ENCODE measurements at regions of chr12 and their contacts with region 1.

Region 1: GRCh38 chr12:52278541-52279421 is 4.3 kb downstream of the KRT86 start:
- DNase-seq: no peak
- H3K4me3 ChIP-seq: no peak overlapping the region
- H3K27me3 ChIP-seq: no peaks in the 10 kb centered on the region
- CTCF ChIP-seq: peak; percentile 99

Region 2: DNA sequence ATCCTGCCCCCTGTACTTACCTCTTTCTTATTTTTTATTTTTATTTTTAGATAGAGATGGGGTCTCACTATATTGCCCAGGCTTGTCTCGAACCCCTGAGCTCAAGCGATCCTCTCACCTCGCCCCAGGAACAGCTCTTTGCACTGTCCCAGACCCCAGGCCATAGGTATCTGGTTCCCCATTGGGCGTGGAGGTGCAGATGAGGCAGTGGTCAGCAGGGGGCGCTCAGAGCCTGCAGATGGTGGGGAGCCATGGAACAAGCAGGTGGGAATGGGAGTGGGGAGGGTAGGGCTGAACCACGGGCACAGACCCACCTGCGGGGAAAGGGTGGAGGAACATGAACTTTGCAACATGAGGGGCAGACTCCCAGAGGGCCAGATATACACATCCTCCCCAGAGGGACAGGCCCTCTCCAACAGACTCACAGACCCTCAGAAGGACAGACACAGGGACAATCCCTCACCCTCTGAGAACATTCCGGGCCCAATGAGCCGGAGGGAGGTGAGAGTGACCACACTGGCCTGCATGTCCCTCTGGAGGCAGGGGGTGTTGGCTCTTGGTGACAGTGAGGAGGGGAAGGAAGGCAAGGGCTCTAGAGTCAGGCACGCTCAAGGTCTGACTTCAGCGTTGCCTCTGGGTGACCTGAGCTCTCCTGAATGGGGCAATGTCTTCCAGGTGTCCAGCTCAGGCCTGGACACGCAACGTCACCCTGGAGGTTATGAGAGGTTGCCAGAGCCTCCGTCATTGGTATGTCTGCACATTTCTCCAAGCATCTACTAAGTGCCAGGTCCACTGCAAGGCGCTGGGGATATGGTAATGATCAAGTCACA is 121.8 kb before region 1 on chr12:
- CTCF ChIA-PET with region 1: interaction called, 12 read pairs
- POLR2A ChIA-PET with region 1: no interaction called
- DNase-seq: no peak
- H3K4me3 ChIP-seq: no peak overlapping the region
- H3K27me3 ChIP-seq: no peaks in the 10 kb centered on the region
- CTCF ChIP-seq: peak; percentile 96

Region 3: DNA sequence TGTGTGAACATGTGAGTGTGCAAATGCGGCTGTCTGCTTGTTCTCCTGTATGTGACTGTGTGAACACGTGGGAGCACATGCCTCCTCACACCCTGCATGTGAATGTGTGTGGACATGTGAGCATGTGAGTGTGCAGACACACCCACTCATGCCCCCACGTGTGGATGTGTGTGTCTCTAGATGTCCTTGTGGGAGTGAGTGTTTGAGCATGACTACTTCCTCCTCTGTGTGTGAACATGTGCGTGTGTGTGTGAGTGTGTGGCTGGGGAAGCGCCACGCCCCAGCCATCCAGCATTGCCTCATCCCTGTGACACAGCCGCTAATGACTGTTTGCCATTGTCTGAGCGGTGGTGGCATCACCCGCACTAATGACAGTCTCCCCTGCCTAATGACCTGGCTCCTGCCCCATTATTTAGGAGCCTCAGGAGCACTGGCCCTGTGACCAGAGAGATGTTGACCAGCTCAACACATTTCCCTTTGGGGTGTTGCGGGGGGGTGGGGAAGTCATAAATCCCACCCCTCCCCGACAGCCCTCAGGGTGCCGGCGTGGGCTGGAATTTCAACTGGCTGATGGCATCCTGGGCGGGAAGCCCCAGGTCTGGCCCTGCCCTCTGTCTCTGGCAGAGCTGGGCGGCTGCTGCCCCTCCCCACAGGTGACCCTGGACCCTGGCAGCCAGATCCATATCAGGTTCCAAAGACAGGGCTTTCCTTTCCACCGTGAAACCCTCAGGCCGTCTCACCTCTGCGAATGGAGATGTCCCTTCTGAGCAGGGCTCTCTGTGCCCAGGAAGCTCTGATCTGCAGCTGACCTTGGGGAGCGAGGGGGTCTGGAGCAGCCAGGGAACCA is 75.5 kb before region 1 on chr12:
- CTCF ChIA-PET with region 1: interaction called, 15 read pairs
- POLR2A ChIA-PET with region 1: no interaction called
- DNase-seq: peak; percentile 65
- H3K4me3 ChIP-seq: no peak overlapping the region
- H3K27me3 ChIP-seq: no peaks in the 10 kb centered on the region
- CTCF ChIP-seq: no peak

Region 4: GRCh38 chr12:52221912-52222457 is 56.8 kb before region 1 on chr12:
- CTCF ChIA-PET with region 1: interaction called, 39 read pairs
- POLR2A ChIA-PET with region 1: no interaction called
- DNase-seq: no peak
- H3K4me3 ChIP-seq: no peak overlapping the region
- H3K27me3 ChIP-seq: no peaks in the 10 kb centered on the region
- CTCF ChIP-seq: peak; percentile 57

Region 5: DNA sequence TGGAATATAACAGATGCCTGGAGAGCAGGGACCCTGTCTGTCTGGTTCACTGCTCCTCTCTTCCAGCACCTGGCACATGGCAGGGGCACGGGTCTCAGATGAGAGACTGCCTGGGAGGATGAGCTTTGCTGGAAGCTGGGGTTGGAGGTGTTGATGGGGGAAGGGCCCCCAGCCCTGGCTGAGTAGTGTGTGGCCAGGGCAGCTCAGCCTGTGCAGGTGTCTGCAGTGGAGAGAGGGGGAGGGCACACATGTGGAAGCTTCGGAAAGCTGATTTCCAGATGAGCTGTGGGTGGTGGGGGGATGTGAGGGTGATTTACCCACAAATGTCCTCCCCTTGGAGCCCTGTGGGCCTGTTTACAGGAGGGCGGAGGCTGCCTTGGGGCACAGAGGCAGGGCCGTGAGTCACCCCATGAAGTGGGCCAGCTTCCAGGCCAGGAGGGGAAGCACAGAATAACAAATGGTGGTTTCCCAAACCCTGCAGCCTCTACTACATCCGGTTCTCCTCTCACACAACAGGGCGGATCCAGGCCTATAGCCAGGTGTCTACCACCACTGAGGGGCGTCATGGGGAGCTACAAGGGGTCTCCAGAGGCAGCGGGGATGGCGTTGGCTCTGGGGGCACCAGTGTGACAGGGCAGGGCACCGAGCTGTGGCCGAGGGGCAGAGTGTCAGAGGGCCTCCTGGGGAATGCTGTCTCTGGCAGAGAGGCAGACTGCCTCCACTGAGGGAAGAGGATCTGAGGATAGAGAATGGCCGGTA is 34.7 kb before region 1 on chr12:
- CTCF ChIA-PET with region 1: interaction called, 19 read pairs
- POLR2A ChIA-PET with region 1: no interaction called
- DNase-seq: peak; percentile 90
- H3K4me3 ChIP-seq: no peak overlapping the region
- H3K27me3 ChIP-seq: no peaks in the 10 kb centered on the region
- CTCF ChIP-seq: no peak

Region 6: DNA sequence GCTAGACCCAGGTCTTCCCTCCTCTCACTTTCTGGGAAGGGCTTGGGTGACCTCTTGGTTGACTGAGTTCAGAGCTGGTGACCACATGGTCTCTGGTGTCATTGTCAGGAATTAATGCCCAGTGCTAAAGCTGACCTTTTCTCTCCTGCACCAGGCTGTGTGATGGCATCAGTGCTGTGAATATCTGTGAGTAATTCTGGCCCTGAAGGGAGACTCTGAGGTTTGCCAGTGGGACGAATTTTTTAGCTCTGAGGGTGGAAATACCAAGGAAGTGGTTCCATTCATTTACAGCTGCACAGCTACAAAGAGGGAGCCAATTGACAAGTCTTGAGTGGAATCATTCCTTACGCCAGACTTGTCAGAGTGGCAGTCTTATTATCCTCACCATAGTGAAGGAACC is 10.6 kb before region 1 on chr12:
- CTCF ChIA-PET with region 1: interaction called, 86 read pairs
- POLR2A ChIA-PET with region 1: no interaction called
- DNase-seq: no peak
- H3K4me3 ChIP-seq: no peak overlapping the region
- H3K27me3 ChIP-seq: no peaks in the 10 kb centered on the region
- CTCF ChIP-seq: no peak

Region 7: GRCh38 chr12:52327052-52327829 is 48.5 kb after region 1 on chr12:
- CTCF ChIA-PET with region 1: interaction called, 47 read pairs
- POLR2A ChIA-PET with region 1: no interaction called
- DNase-seq: peak; percentile 70
- H3K4me3 ChIP-seq: no peak overlapping the region
- H3K27me3 ChIP-seq: peaks cover 2% of the 10 kb centered on the region; the same call in 1 of the 2 replicates
- CTCF ChIP-seq: peak; percentile 94

Region 8: GRCh38 chr12:52404956-52405355 is 126.2 kb after region 1 on chr12:
- CTCF ChIA-PET with region 1: no interaction called
- POLR2A ChIA-PET with region 1: no interaction called
- DNase-seq: no peak
- H3K4me3 ChIP-seq: no peak overlapping the region
- H3K27me3 ChIP-seq: peaks cover 8% of the 10 kb centered on the region
- CTCF ChIP-seq: no peak

Region 9: GRCh38 chr12:52473768-52474167 is 195.0 kb after region 1 on chr12 and contains the start of gene KRT6C:
- CTCF ChIA-PET with region 1: no interaction called
- POLR2A ChIA-PET with region 1: no interaction called
- DNase-seq: no peak
- H3K4me3 ChIP-seq: no peak within 1 kb of the TSS
- H3K27me3 ChIP-seq: peaks cover 1% of the 10 kb centered on the region
- CTCF ChIP-seq: no peak
- polyA plus RNA-seq, gene KRT6C: not detected in 2 replicates